ENCODE measurements at regions of chr9 and their contacts with region 1.

Region 1: GRCh38 chr9:34328987-34329832 is at the starts of genes KIF24 and NUDT2:
- H3K4me3 Mint-ChIP-seq: peak within 1 kb of the TSS; percentile 90
- H3K27ac Mint-ChIP-seq: peak within 1 kb of the TSS; percentile 95
- H3K4me1 Mint-ChIP-seq: peaks cover 43% of the 10 kb centered on the region
- H3K27me3 Mint-ChIP-seq: no peaks in the 10 kb centered on the region

Region 2: GRCh38 chr9:34271265-34272006 is 57.8 kb before region 1 on chr9:
- intact Hi-C with region 1: no loop called
- H3K4me3 Mint-ChIP-seq: no peak overlapping the region
- H3K27ac Mint-ChIP-seq: no peak overlapping the region
- H3K4me1 Mint-ChIP-seq: no peaks in the 10 kb centered on the region
- H3K27me3 Mint-ChIP-seq: no peaks in the 10 kb centered on the region

Region 3: DNA sequence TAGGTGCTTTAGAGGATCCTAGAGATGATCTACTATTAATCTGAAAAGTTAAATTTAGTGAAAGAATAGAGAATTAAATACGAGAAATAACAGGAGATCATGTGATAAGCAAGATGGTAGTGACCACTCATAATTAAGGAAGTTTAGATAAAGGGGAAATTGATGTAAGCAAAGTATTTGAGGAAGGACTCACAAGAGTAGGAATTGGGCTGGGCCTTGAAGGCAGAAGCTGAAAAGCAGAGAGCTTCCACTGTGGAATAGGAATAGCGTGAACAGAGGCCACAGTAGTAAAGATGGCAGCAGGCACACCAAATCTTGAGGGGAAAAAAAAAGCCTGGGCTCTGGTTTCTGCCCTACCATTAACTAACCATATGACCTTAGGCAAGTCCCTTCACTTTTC is 38.2 kb before region 1 on chr9:
- intact Hi-C with region 1: loop called (anchors 2 kb)
- H3K4me3 Mint-ChIP-seq: no peak overlapping the region
- H3K27ac Mint-ChIP-seq: no peak overlapping the region
- H3K4me1 Mint-ChIP-seq: peaks cover 7% of the 10 kb centered on the region
- H3K27me3 Mint-ChIP-seq: no peaks in the 10 kb centered on the region

Region 4: DNA sequence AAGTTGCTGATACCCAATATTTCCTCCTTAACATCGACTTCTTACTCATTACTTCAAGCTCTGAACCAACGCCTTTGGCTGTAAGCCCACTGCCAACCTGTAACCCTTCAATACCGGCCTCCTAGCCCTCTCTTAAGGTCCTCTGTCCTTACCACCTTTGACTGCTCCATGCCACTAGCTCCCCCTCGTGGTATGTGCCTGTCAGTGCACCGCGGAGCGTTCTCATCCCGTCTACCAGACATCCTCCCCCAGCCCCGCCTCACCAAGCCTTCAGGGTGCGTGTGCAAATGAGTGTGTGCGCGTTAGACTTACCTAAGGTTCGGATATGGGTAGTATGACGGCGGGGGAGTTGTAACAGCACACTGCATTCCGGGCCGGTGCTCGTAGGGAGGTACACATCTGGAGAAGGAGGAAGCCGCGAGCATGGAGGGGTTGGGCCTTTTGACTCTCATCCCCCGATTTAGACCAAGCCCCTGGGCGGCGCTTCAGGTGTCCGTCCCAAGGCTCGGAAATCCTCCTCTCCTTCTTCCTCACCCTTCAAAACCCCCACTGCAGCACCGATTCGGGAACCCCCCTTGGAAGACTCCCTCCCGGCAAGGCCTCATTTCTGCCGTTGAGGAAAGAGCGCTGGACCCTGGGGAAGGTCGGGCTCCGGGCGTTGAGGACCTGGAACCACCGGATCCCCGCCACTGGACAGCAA is 50.3 kb after region 1 on chr9:
- intact Hi-C with region 1: loop called (anchors 1 kb)
- H3K4me3 Mint-ChIP-seq: peak overlapping the region; percentile 78
- H3K27ac Mint-ChIP-seq: peak overlapping the region; percentile 77
- H3K4me1 Mint-ChIP-seq: peaks cover 50% of the 10 kb centered on the region
- H3K27me3 Mint-ChIP-seq: peaks cover 55% of the 10 kb centered on the region

Region 5: DNA sequence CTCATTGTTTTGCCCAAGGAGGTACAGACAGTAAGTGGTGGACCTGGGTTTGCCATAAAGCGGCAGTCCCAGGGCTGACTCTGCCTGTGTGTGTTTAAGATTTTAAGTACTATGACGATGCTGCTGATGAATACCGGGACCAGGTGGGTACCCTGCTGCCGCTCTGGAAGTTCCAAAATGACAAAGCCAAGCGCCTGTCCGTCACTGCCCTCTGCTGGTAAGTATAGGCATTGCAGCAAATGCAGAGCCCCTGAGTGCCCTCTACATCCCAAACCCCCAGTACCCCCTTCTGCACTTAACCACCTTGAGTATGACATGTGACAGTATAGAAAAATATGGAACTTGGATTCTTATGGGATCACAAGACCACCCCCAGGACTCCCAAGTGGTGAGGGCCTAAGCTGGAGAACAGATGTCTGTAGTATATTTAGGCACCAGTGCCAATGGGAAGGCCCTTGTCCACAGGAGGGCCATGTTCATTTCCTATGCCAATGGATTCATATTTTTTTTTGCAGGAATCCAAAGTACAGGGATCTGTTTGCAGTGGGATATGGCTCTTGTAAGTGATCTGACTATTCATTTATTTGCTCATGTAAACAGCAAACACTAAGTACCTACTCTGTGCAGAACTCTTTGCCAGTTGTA is 171.5 kb after region 1 on chr9:
- intact Hi-C with region 1: loop called (anchors 2 kb)
- H3K4me3 Mint-ChIP-seq: no peak overlapping the region
- H3K27ac Mint-ChIP-seq: no peak overlapping the region
- H3K4me1 Mint-ChIP-seq: peaks cover 13% of the 10 kb centered on the region
- H3K27me3 Mint-ChIP-seq: peaks cover 33% of the 10 kb centered on the region

Measured in dendritic cell treated with granulocyte-macrophage colony-stimulating factor and Interleukin-4, amounts not matched to agents 40 ng/mL and 50 ng/mL, for 4 days (primary cell).